Right ventricle myocardium superior (tissue), 1 donor: ENCODE measurements at regions of chr20 and their contacts with region 1.

Region 1: DNA sequence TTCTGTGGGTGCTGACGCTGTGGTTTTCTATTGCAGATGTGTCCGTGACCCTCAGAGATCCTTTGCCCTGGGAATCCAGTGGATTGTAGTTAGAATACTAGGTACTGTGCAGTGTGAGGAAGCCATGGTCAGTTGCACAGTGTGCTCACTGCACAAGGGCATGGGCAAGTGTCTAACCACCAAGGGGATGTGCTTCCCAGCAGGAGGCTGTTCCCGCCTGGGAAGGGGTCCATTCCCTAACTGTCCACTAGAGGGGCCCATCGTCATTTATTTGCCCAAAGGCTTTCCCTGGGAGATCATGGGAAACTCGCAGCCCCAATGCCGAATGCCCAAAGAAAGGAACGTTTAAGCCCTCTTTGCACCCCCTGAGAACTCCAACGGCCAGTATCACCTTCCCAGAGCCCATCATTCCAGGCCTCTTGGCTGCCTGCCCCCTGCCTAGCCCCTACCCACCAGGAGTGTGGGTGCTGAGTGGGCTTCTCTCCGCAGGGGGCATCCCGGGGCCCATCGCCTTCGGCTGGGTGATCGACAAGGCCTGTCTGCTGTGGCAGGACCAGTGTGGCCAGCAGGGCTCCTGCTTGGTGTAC is 26.2 kb downstream of the SLCO4A1 start:
- DNase-seq: peak; percentile 66
- ATAC-seq: peak; percentile 79

Region 2: DNA sequence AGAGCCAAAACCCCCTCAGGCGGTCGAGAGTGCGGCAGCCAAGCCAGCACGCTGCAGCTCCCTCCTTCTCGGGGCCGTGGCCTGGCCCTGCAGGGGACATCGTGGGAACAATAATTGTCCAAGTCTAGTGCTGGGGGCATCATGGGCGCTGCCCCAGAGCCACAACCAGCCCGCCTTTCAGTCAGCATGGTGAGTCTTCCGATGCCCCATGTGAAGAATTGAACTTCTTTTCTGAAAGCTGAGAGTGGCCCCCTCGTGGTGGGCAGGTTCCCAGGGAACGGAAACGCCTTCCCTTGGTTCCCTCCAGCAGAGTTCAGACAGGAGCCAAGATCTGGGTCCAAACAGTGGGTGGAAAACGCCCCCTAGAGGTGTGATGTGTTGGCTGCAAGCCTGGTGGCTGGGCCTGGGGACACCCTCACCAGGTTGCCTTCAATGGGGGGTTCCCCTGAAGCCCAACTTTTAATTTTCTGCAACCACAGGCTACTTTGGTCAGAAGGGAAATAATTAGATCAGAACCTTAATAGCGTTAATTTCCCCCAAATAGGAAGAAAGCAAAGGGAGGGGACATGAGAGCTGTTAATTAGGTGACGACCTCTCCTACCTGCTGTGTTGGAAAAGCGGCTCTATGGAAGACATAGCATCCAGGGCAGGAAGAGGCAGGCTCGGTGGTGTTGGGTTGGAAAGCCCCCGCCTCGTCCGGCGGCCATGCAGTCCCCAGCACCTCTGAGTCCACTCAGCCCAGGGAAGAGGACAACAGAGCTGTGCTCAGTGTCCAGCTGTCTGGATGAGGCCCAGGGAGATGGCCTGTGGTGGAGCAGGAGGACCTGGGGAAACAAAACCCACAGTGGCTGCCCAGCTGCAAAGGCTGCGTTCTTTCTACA is 123.0 kb after region 1 on chr20:
- intact Hi-C with region 1: loop called (anchors 2 kb)
- DNase-seq: peak; percentile 85
- ATAC-seq: no peak

Region 3: DNA sequence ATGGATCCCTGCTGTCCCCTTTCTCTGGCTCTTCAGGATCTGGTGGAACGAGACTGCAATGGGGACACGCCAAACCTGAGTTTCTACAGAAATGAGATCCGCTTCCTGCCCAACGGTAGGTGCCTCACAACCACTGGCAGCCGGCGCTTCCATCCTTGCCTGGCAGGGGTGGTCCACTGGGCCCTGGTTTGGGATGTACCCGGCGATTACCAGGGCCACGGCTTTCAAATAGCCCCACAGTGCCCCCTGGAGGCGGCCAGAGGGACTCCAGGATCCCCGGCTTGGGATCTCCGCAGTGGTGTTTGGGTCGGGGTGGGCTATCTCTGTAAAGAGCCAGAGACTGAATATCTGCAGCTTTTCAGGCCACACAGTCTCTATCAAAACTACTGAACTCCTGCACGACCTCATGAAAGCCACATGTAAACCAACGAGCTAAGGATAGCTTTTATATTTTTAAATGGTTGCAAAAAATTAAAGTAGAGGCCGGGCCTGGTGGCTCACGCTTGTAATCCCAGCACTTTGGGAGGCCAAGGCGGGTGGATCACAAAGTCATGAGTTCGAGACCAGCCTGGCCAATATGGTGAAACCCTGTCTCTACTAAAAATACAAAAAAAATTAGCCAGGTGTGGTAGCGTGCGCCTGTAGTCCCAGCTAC is 139.8 kb after region 1 on chr20:
- intact Hi-C with region 1: loop called (anchors 5 kb)
- DNase-seq: peak; percentile 87
- ATAC-seq: peak; percentile 67